HEK293 (cell line): ENCODE measurements at regions of chr11 and their contacts with region 1.

Region 1: GRCh38 chr11:63681321-63682049 is at the start of gene RTN3:
- H3K4me3 ChIP-seq: peak within 1 kb of the TSS; percentile 84
- H3K27ac ChIP-seq: peak within 1 kb of the TSS; percentile 91
- H3K4me1 ChIP-seq: no peaks in the 10 kb centered on the region
- CTCF ChIP-seq: no peak

Region 2: DNA sequence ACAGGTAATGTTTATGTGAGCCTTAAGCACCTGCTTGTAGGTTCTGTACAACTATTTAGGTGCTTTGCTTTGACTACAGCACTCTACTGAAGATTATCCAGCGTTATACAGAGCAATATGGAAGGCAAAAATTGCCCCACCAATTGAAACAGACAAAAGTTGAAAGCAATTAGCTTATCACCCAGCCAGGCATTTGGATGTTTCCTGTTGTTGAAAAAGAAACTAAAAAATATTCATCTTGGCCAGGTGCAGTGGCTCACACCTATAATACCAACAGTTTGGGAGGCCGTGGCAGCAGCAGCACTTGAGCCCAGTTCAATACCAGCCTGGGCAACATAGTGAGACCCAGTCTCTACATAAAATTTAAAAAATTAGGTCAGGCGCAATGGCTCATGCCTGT is 28.8 kb before region 1 on chr11:
- CTCF ChIA-PET with region 1: no interaction called
- POLR2A ChIA-PET with region 1: no interaction called
- H3K4me3 ChIP-seq: no peak overlapping the region
- H3K27ac ChIP-seq: no peak overlapping the region
- H3K4me1 ChIP-seq: no peaks in the 10 kb centered on the region
- CTCF ChIP-seq: no peak

Region 3: DNA sequence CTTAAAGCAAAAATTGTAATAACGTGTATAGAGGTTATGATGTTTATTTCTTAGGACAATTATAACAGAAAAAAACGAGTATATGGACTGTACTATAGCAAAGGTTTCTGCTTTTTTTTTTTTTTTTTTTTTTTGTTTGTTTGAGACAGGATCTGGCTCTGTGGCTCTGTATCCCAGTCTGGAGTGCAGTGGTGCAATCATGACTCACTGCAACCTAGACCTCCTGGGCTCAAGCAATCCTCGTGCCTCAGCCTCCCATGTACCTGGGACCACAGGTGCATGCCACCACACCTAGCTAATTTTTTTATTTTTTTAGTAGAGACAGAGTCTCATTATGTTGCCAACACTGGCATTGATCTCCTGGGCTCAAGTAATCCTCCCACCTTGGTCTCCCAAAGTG is 47.8 kb after region 1 on chr11:
- CTCF ChIA-PET with region 1: no interaction called
- POLR2A ChIA-PET with region 1: interaction called, 10 read pairs
- H3K4me3 ChIP-seq: no peak overlapping the region
- H3K27ac ChIP-seq: no peak overlapping the region
- H3K4me1 ChIP-seq: no peaks in the 10 kb centered on the region
- CTCF ChIP-seq: no peak

Region 4: GRCh38 chr11:63768237-63769043 is 87.0 kb after region 1 on chr11 and contains the start of gene ZFTA:
- CTCF ChIA-PET with region 1: no interaction called
- POLR2A ChIA-PET with region 1: interaction called, 10 read pairs
- H3K4me3 ChIP-seq: peak within 1 kb of the TSS; percentile 51
- H3K27ac ChIP-seq: peak within 1 kb of the TSS; percentile 71; the same call in 1 of the 2 replicates
- H3K4me1 ChIP-seq: no peaks in the 10 kb centered on the region
- CTCF ChIP-seq: no peak

Region 5: GRCh38 chr11:63813035-63813562 is 131.6 kb after region 1 on chr11 and contains the start of gene SPINDOC:
- CTCF ChIA-PET with region 1: no interaction called
- POLR2A ChIA-PET with region 1: no interaction called
- H3K4me3 ChIP-seq: peak within 1 kb of the TSS; percentile 86
- H3K27ac ChIP-seq: peak within 1 kb of the TSS; percentile 85
- H3K4me1 ChIP-seq: no peaks in the 10 kb centered on the region
- CTCF ChIP-seq: no peak